ENCODE measurements at regions of chr3 and their contacts with region 1.

Region 1: DNA sequence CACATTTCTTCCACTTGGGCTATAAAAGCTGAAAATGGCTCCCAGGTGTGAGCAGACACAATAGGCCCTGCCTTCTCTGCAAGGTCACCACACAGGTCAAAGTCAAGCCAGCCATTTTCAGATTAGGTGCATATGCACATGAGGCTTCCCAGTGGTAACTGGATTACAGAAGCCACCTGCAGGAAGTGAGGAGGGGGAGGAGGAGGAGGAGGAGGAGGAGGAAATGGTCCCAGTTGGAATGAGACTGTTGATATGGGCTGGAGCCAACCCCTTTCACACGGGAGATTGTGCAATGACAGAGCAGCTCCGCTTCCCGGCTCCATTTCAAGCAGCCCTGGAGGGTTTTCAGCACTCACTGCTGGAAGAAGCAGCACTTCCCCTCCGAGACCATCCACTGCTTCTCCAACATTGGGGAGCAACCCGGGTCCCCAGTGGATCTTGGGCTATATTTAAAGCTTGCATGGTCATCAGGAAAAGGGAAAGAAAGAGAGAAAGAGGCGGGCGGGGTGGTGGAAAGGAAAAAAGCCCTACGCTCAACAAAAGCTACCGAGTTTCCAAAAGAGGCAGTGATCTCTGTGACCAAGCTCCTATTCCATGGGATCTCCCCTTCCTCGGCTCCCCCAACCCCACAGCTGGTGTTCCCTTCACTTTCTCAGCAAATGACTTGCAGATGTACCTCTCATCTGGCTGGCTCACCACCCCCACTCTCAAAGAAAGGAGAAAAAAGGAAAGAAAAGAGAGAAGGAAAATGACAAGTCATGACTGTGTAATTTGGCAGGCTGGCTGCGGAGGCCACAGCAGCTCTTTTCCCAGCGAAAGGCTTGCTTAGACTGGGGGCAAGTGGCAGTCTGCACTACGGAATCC is 58.3 kb downstream of the LRIG1 start:
- DNase-seq: peak; percentile 90
- H3K4me3 Mint-ChIP-seq: peak overlapping the region; percentile 51
- H3K27ac Mint-ChIP-seq: peak overlapping the region; percentile 89
- H3K4me1 Mint-ChIP-seq: peaks cover 36% of the 10 kb centered on the region
- H3K27me3 Mint-ChIP-seq: no peaks in the 10 kb centered on the region
- CTCF ChIP-seq: no peak

Region 2: DNA sequence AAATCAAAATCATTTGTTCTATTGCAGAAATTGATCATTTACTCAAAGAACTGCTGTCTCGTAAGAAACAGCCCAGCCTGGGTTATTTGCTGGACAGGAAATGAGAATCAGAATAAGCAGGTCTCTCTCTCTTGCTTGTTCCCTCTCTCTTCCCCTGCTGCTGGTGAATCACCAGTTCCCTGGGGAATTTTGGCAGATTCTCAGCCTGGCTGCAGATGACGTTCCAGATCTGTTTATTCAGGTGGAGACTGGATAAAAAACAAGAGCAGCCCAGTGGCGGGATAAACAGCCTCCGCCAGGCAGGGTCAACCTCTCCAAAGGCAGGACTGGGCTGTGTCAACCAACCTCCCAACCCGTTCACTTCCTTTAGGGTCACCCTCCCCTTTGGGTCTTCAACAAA is 13.8 kb before region 1 on chr3:
- CTCF ChIA-PET with region 1: interaction called, 4 read pairs
- POLR2A ChIA-PET with region 1: interaction called, 11 read pairs
- intact Hi-C with region 1: no loop called
- DNase-seq: peak; percentile 97
- H3K4me3 Mint-ChIP-seq: peak overlapping the region; percentile 62
- H3K27ac Mint-ChIP-seq: peak overlapping the region; percentile 93
- H3K4me1 Mint-ChIP-seq: peaks cover 49% of the 10 kb centered on the region
- H3K27me3 Mint-ChIP-seq: no peaks in the 10 kb centered on the region
- CTCF ChIP-seq: no peak